Activated CD4-positive, alpha-beta T cell treated with anti-CD3 and anti-CD28 coated beads, Interleukin-2, amount 10 ng/mL, durations not matched to agents 24 days and 14 days (primary cell): ENCODE measurements at regions of chr10 and their contacts with region 1.

Region 1: GRCh38 chr10:119131512-119132240 is 27.8 kb downstream of the DENND10 start:
- DNase-seq: peak; percentile 89
- H3K4me3 Mint-ChIP-seq: peak overlapping the region; percentile 83
- H3K27ac Mint-ChIP-seq: peak overlapping the region; percentile 95
- H3K4me1 Mint-ChIP-seq: peaks cover 52% of the 10 kb centered on the region
- H3K27me3 Mint-ChIP-seq: no peaks in the 10 kb centered on the region

Region 2: GRCh38 chr10:119103903-119104652 is 27.6 kb before region 1 on chr10 and contains the start of gene DENND10:
- intact Hi-C with region 1: loop called (anchors 1 kb)
- DNase-seq: peak; percentile 91
- H3K4me3 Mint-ChIP-seq: peak within 1 kb of the TSS; percentile 84
- H3K27ac Mint-ChIP-seq: peak within 1 kb of the TSS; percentile 66
- H3K4me1 Mint-ChIP-seq: peaks cover 29% of the 10 kb centered on the region
- H3K27me3 Mint-ChIP-seq: peaks cover 2% of the 10 kb centered on the region
- total RNA-seq, gene DENND10: 18.6 and 23.2 TPM in 2 replicates

Region 3: DNA sequence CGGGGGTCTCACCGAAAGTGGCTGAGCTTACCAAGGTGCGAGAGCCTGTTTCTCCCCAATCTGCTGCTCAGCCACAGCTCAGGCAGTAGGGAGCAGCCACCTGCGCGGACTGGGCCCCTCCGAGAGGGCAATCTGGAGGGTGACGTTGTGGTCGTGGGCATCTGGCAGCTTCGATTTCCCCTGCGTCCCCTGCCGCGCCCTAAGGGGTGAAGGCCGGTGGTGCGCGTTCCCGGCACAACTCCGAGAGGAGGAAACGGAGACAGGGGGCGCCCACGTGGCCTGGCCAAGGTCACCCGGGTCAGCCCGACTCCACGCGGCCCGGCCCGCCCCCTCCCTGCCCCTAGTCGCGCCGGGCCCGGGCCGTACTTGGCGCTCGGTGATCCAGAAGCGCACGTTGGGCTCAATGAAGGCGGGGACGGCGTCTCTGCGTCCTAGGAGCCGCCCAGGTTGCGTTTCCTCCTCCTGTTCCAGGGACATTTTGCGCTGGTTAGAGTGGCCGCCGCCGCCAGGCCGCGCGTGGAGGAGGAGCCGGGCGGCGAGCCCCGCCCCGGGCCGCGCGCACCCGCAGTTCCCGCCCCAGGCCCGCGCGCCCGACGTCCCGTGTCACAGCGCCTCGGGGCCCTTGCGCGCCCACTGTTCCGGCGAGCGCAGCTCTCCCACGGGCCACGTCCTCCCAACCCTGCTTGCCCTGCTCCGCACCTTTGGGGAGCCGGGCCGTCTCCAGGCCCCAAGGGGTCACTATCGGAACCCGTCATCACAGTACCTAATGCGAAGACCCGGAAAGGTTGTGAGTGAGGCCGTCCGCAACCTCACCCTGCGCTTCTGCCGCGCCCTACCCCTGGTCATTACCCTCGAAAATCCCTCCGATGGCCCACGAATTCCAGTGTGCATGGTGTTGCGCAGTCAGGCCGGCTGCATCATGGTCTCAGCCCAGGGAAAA is 33.8 kb after region 1 on chr10 and contains the start of gene SFXN4:
- intact Hi-C with region 1: loop called (anchors 2 kb)
- DNase-seq: peak; percentile 96
- H3K4me3 Mint-ChIP-seq: peak within 1 kb of the TSS; percentile 90
- H3K27ac Mint-ChIP-seq: peak within 1 kb of the TSS; percentile 95
- H3K4me1 Mint-ChIP-seq: peaks cover 35% of the 10 kb centered on the region
- H3K27me3 Mint-ChIP-seq: no peaks in the 10 kb centered on the region
- total RNA-seq, gene SFXN4: 58.1 and 63.0 TPM in 2 replicates